Dorsolateral prefrontal cortex (tissue), 120 donors: ENCODE measurements at regions of chr9 and their contacts with region 1.

Region 1: GRCh38 chr9:73200694-73201452 is 49.2 kb downstream of the ANXA1 start:
- DNase-seq: no peak
- H3K4me3 ChIP-seq: peak overlapping the region in 31 of 59 donors; percentile 1 to 44 (median 23)
- H3K27ac ChIP-seq: peak overlapping the region in 11 of 59 donors; percentile 1 to 60 (median 21)
- H3K27me3 ChIP-seq: peaks cover 0 to 4% (median 0%) of the 10 kb centered on the region in 45 donors
- CTCF ChIP-seq: peak; percentile 42 to 87 (median 72)

Region 2: DNA sequence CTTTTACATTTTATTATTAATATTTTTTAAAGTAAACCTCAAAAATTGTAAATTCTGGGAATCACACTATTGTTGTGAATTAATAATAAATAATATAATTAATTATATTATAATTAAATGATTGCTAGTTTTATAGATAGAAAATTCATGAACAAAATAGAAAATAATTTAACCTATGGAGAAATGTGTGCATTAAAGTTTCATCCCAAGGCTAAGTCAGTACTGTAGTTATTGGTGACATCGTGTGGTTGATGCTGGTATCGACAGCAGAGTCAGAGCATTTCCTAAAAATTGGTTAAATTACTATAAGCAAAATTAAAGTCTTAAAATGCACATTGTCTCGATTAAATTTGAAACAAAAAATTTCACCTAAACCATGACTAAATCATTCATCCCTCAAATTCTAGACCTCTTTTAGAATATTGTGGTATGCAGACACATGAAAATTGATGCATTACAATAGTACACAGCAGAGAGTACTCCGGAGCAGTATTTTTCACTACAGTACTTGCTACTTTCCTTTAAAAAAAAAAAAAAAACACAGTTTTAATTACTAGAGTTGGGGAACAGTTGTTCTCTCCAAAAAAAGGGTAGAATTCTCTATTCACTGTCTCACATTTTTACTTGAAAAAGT is 1370.1 kb after region 1 on chr9:
- intact Hi-C with region 1: loop called (anchors 5 kb)
- DNase-seq: peak in 2 of 10 donors; percentile 33 to 40
- H3K4me3 ChIP-seq: no peak overlapping the region
- H3K27ac ChIP-seq: no peak overlapping the region
- H3K27me3 ChIP-seq: no peaks in the 10 kb centered on the region
- CTCF ChIP-seq: peak; percentile 67 to 92 (median 80)

Region 3: DNA sequence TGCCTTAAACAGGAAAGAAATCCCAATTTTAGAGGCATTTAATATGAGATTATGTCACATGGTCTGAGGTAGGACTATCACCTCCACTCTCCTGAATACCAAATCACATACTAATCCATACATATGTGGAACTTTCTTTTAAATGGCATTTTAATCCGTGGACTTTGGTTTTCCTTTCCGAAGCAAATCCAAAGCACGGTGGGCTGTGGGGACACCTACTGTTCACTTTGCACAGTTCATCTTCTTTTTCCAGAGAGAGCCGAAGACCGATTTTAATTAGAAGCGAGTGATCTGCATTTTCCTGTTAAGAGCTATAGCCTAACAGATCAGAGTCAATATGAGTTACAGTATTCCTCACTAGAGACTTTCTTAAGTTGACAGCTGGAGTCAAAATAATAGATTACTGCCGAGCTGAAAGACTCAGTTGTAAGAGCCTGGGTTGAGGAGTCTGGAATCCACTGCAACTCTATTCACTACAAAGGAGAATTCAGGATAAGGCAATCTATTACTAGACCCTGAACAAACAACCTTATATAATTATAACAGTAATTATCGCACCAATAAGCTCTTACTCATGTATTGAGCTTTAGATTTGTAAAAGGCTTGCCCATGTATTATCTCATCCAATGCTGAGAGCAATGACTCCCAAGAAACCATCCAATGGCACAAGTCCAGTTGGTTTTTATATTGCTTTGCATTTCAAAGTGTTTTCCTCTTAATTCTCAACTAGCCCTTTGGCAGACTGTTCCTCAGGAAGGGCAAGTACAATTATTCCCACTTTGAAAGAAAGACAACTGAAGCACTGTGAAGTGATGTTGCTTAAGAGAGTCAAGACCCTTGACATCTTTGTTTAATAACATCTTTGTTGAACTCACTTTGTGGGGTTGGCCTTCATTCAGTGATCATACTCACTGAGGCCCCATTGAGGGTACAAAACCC is 1542.2 kb after region 1 on chr9:
- intact Hi-C with region 1: loop called in 1 of 2 experiments (anchors 5 kb)
- DNase-seq: peak in 6 of 10 donors; percentile 44 to 54 (median 50)
- H3K4me3 ChIP-seq: peak overlapping the region in 12 of 59 donors; percentile 2 to 35 (median 8)
- H3K27ac ChIP-seq: peak overlapping the region in 18 of 59 donors; percentile 2 to 58 (median 20)
- H3K27me3 ChIP-seq: no peaks in the 10 kb centered on the region
- CTCF ChIP-seq: peak; percentile 62 to 85 (median 78)